OCI-LY7 (cell line): ENCODE measurements at regions of chr19 and their contacts with region 1.

Region 1: GRCh38 chr19:7799640-7800355 is 30.2 kb upstream of the EVI5L start:
- DNase-seq: peak; percentile 76
- H3K4me3 ChIP-seq: no peak overlapping the region
- H3K27ac ChIP-seq: no peak overlapping the region
- H3K4me1 ChIP-seq: peaks cover 4% of the 10 kb centered on the region
- CTCF ChIP-seq: peak; percentile 85

Region 2: GRCh38 chr19:7562646-7563393 is 237.0 kb before region 1 on chr19:
- CTCF ChIA-PET with region 1: no interaction called
- POLR2A ChIA-PET with region 1: no interaction called
- intact Hi-C with region 1: loop called (anchors 1 kb)
- DNase-seq: no peak
- H3K4me3 ChIP-seq: no peak overlapping the region
- H3K27ac ChIP-seq: no peak overlapping the region
- H3K4me1 ChIP-seq: no peaks in the 10 kb centered on the region
- CTCF ChIP-seq: no peak

Region 3: DNA sequence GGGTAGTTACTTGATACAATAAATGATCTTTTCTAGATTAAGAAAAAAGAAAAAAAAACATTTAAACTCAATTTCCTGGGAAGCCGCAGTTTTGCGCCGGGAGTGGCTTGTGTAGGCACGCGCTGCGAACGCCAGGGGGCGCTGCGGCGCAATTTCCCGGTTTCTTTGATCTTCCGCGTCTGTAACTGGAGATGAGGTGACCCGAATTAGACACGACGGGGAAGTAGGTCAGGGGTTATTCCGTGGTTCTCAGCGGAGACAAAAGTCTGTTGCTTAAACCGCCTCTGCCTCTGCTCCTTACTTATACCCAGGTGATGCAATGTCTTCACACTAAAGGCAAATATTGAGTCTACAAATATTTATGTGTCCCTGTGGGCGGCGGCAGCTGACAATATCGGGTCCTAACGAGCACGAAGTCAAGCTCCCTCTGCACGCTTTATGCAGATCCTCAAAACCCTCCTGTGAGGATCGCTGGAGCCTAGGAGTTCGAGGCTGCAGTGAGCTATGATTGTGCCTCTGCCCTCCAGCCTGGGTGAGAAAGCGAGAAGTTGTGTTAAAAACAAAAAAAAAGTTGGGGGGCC is 147.6 kb before region 1 on chr19:
- CTCF ChIA-PET with region 1: no interaction called
- POLR2A ChIA-PET with region 1: no interaction called
- intact Hi-C with region 1: loop called (anchors 1 kb)
- DNase-seq: peak; percentile 81
- H3K4me3 ChIP-seq: peak overlapping the region; percentile 51
- H3K27ac ChIP-seq: no peak overlapping the region
- H3K4me1 ChIP-seq: peaks cover 4% of the 10 kb centered on the region
- CTCF ChIP-seq: peak; percentile 98

Region 4: GRCh38 chr19:7874076-7874896 is 74.5 kb after region 1 on chr19 and contains the start of gene PRR36:
- CTCF ChIA-PET with region 1: no interaction called
- POLR2A ChIA-PET with region 1: no interaction called
- intact Hi-C with region 1: no loop called
- DNase-seq: no peak
- H3K4me3 ChIP-seq: no peak within 1 kb of the TSS
- H3K27ac ChIP-seq: no peak within 1 kb of the TSS
- H3K4me1 ChIP-seq: peaks cover 32% of the 10 kb centered on the region
- CTCF ChIP-seq: no peak
- total RNA-seq, gene PRR36: not detected in 2 replicates